Activated CD4-positive, alpha-beta T cell treated with anti-CD3 and anti-CD28 coated beads for 36 hours (primary cell): ENCODE measurements at regions of chr17 and their contacts with region 1.

Region 1: GRCh38 chr17:17752089-17752820 is 71.0 kb downstream of the RAI1 start:
- DNase-seq: peak; percentile 99
- ATAC-seq: peak; percentile 89
- H3K4me3 Mint-ChIP-seq: peak overlapping the region; percentile 85
- H3K27ac Mint-ChIP-seq: peak overlapping the region; percentile 99
- H3K4me1 Mint-ChIP-seq: peaks cover 68% of the 10 kb centered on the region
- H3K27me3 Mint-ChIP-seq: no peaks in the 10 kb centered on the region

Region 2: GRCh38 chr17:17280613-17281549 is 471.4 kb before region 1 on chr17 and contains the start of gene COPS3:
- CTCF ChIA-PET with region 1: no interaction called
- POLR2A ChIA-PET with region 1: no interaction called
- intact Hi-C with region 1: loop called (anchors 2 to 5 kb)
- DNase-seq: peak; percentile 99
- ATAC-seq: peak; percentile 94
- H3K4me3 Mint-ChIP-seq: peak within 1 kb of the TSS; percentile 92
- H3K27ac Mint-ChIP-seq: peak within 1 kb of the TSS; percentile 95
- H3K4me1 Mint-ChIP-seq: peaks cover 41% of the 10 kb centered on the region
- H3K27me3 Mint-ChIP-seq: no peaks in the 10 kb centered on the region
- total RNA-seq, gene COPS3: 79.6 to 83.1 TPM

Region 3: GRCh38 chr17:17445925-17446665 is 306.2 kb before region 1 on chr17:
- CTCF ChIA-PET with region 1: no interaction called
- POLR2A ChIA-PET with region 1: no interaction called
- intact Hi-C with region 1: no loop called
- DNase-seq: no peak
- ATAC-seq: no peak
- H3K4me3 Mint-ChIP-seq: no peak overlapping the region
- H3K27ac Mint-ChIP-seq: no peak overlapping the region
- H3K4me1 Mint-ChIP-seq: no peaks in the 10 kb centered on the region
- H3K27me3 Mint-ChIP-seq: no peaks in the 10 kb centered on the region

Region 4: GRCh38 chr17:17783116-17783824 is 31.0 kb after region 1 on chr17:
- CTCF ChIA-PET with region 1: interaction called, 4 read pairs
- POLR2A ChIA-PET with region 1: no interaction called
- intact Hi-C with region 1: loop called in 1 of 2 experiments (anchors 2 kb)
- DNase-seq: peak; percentile 78
- ATAC-seq: peak; percentile 58
- H3K4me3 Mint-ChIP-seq: peak overlapping the region; percentile 55
- H3K27ac Mint-ChIP-seq: no peak overlapping the region
- H3K4me1 Mint-ChIP-seq: peaks cover 18% of the 10 kb centered on the region
- H3K27me3 Mint-ChIP-seq: no peaks in the 10 kb centered on the region

Region 5: GRCh38 chr17:17836250-17836817 is 84.1 kb after region 1 on chr17:
- CTCF ChIA-PET with region 1: no interaction called
- POLR2A ChIA-PET with region 1: no interaction called
- intact Hi-C with region 1: loop called (anchors 1 to 5 kb)
- DNase-seq: peak; percentile 99
- ATAC-seq: peak; percentile 74
- H3K4me3 Mint-ChIP-seq: peak overlapping the region; percentile 94
- H3K27ac Mint-ChIP-seq: peak overlapping the region; percentile 98
- H3K4me1 Mint-ChIP-seq: peaks cover 74% of the 10 kb centered on the region
- H3K27me3 Mint-ChIP-seq: no peaks in the 10 kb centered on the region

Region 6: GRCh38 chr17:17959520-17960361 is 207.5 kb after region 1 on chr17:
- CTCF ChIA-PET with region 1: no interaction called
- POLR2A ChIA-PET with region 1: no interaction called
- intact Hi-C with region 1: loop called in 1 of 2 experiments (anchors 2 kb)
- DNase-seq: peak; percentile 67
- ATAC-seq: peak; percentile 61
- H3K4me3 Mint-ChIP-seq: peak overlapping the region; percentile 71
- H3K27ac Mint-ChIP-seq: peak overlapping the region; percentile 95
- H3K4me1 Mint-ChIP-seq: peaks cover 69% of the 10 kb centered on the region
- H3K27me3 Mint-ChIP-seq: no peaks in the 10 kb centered on the region

Region 7: GRCh38 chr17:18087610-18088491 is 335.6 kb after region 1 on chr17 and contains the start of gene DRG2:
- CTCF ChIA-PET with region 1: no interaction called
- POLR2A ChIA-PET with region 1: no interaction called
- intact Hi-C with region 1: loop called in 1 of 2 experiments (anchors 5 kb)
- DNase-seq: peak; percentile 93
- ATAC-seq: peak; percentile 90
- H3K4me3 Mint-ChIP-seq: peak within 1 kb of the TSS; percentile 99
- H3K27ac Mint-ChIP-seq: peak within 1 kb of the TSS; percentile 98
- H3K4me1 Mint-ChIP-seq: peaks cover 22% of the 10 kb centered on the region
- H3K27me3 Mint-ChIP-seq: no peaks in the 10 kb centered on the region
- total RNA-seq, gene DRG2: 42.5 to 45.6 TPM